ENCODE measurements at regions of chr12 and their contacts with region 1.

Region 1: DNA sequence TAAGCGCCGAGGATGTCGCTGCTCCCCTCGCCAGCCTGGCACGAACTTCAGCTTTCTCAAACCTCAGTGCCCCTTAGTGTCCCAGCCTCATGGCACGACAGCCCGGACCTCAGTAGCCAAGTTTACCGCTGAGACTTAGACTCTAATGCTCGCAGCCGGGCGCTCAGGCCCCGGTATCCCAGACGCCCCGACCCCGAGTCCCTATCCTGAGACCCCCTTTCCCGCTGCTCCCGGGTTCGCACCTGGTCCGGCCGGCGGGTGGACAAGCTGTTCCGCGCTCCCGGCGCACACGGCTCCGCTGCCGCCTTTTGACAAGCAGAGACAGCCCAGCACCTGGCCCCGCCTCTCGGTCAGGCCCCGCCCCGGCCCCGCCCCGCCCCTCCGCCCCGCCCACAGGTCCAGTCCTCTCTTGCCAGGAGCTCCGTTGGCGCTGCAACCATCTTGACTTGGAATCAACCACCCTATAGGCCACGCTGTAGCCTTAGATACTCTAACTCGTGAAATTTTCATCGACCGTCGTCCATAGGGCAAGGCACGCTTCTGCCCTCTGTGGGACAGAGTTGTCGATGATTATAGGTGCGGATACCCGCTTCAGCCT is at the start of gene VDR:
- DNase-seq: peak; percentile 65
- H3K4me3 Mint-ChIP-seq: peak within 1 kb of the TSS; percentile 100
- H3K27ac Mint-ChIP-seq: peak within 1 kb of the TSS; percentile 98
- H3K4me1 Mint-ChIP-seq: peaks cover 45% of the 10 kb centered on the region
- H3K27me3 Mint-ChIP-seq: peaks cover 31% of the 10 kb centered on the region
- total RNA-seq, gene VDR: 312 and 317 TPM in 2 replicates

Region 2: DNA sequence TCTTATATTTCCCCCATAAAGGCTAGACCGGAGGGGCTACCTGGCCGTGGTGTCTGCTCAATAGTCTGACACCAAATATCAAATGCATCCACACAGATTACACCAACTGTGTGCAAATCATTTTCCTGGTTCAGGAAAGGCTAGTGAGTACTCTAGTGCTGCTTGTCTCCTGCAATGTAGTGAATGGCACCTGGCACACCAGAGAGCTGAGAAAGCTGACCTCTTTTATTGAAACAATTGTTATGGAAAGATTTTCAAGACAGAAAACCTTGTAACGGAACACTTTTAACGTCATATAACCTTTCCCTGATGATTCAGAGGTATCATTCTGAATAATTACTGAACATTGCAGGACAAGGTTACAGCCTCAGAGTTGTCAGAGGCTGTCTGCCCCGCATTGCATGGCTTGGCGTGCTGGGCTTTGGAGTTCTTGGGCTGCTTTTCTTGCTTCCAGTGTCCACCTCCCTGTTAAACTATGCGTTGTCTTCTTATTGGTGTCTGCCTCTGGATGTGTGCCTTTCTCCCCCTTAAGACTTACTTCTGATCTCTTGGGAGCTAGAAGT is 44.5 kb before region 1 on chr12:
- intact Hi-C with region 1: loop called (anchors 2 kb)
- DNase-seq: no peak
- H3K4me3 Mint-ChIP-seq: peak overlapping the region; percentile 53
- H3K27ac Mint-ChIP-seq: peak overlapping the region; percentile 99
- H3K4me1 Mint-ChIP-seq: peaks cover 63% of the 10 kb centered on the region
- H3K27me3 Mint-ChIP-seq: no peaks in the 10 kb centered on the region

Region 3: DNA sequence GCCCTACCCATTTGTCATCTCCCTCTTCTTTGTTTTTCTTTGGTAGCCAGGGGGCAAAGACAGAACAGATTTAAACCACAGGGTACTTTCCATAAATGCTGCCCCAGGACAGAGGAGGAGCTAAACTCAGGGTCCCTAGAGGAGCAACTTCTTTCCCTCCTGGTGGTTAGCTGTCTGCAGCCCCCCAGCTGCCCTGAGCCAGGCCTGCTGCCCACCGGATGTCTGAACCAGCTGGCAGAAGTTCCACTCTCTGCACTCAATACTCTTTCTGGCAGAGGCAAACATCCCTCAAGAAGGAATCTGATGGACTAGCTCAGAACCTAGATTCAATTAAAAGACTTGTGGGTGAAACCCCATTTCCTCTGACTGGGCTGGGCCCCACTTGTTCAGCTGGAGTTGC is 10.7 kb before region 1 on chr12:
- intact Hi-C with region 1: loop called (anchors 1 kb)
- DNase-seq: no peak
- H3K4me3 Mint-ChIP-seq: peak overlapping the region; percentile 23
- H3K27ac Mint-ChIP-seq: peak overlapping the region; percentile 85
- H3K4me1 Mint-ChIP-seq: peaks cover 93% of the 10 kb centered on the region
- H3K27me3 Mint-ChIP-seq: no peaks in the 10 kb centered on the region

Region 4: DNA sequence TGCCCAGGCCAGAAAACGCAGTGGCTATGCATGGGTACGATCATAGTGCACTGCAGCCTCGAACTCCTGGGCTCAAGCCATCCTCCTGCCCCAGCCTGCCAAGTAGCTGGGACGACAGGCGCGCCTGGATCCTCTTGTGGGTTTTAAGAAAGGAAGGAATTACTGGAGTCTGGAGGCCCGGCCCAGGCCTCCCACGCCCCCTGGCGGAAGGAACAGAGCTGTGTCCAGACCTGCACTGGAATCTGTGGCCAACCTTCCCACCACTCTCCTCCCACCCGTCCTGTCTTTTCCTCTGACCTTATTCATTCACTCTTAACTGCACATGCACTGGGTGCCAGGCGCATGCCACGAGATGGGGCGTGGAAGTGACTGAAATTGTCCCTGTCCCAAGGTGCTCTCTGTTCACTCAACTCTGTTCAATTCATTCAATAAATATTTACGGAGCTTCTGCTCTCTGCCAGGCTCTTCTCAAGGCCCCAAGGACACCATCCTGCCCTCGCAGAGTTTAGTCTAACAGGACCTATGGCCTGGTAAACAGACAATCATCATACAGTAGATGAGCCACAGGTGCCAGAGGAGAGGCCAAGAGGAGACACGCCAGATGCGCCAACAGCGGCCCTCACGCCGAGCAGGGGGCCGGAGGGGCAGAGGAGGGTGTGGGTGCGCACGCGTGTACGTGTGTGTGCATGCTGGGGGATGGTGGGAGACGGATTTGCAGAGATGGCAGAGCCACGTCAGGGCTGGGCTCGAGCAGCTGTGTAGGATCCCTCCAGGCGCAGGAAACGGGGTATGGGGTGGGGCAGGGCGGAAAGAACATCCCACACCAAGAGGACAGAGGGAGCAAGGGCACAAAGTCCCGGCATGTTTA is 44.9 kb after region 1 on chr12:
- intact Hi-C with region 1: loop called (anchors 2 kb)
- DNase-seq: peak; percentile 31
- H3K4me3 Mint-ChIP-seq: no peak overlapping the region
- H3K27ac Mint-ChIP-seq: peak overlapping the region; percentile 6
- H3K4me1 Mint-ChIP-seq: peaks cover 17% of the 10 kb centered on the region
- H3K27me3 Mint-ChIP-seq: no peaks in the 10 kb centered on the region

Region 5: GRCh38 chr12:47963340-47964040 is 58.7 kb after region 1 on chr12 and contains the start of gene TMEM106C:
- intact Hi-C with region 1: loop called (anchors 1 kb)
- DNase-seq: peak; percentile 89
- H3K4me3 Mint-ChIP-seq: peak within 1 kb of the TSS; percentile 95
- H3K27ac Mint-ChIP-seq: peak within 1 kb of the TSS; percentile 81
- H3K4me1 Mint-ChIP-seq: peaks cover 30% of the 10 kb centered on the region
- H3K27me3 Mint-ChIP-seq: peaks cover 27% of the 10 kb centered on the region
- total RNA-seq, gene TMEM106C: 168 and 169 TPM in 2 replicates

Region 6: DNA sequence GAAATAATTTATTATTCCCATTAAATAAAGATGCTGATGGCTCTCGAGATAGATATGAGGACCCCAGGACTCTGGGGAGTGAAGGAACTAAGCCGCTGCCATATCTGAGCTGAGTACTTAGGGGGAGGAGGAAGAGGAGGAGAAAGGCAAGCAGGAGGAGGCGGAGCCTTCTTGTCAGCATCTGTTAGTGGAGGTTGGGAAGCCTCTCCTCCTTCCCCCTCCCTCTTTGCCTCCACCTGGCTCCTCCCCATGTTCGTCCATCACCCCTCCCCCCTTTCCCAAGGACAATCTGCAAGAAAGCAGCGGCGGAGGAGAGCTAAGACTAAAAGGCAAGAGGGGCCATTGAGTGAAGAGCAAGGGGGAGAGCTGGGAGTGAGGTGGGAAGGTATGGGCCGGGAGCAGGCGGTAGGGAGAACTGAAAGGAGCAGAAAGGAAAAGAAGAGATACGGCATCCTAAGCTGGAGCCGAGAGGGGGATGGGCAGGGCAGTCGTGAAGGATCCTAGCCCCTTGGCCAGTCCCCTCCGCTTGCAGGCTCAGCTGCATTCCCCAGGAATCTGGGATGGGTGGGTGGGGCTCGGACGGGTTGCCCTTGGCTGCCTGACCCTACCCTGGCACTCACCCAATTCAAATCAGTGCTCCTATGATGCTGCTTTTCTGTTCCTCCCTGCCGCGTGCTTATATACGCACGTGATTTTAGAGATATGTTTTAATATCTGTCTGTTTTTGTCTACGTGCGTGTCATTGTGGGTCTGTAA is 214.4 kb after region 1 on chr12 and contains the start of gene PFKM:
- intact Hi-C with region 1: no loop called
- DNase-seq: peak; percentile 69
- H3K4me3 Mint-ChIP-seq: peak within 1 kb of the TSS; percentile 96
- H3K27ac Mint-ChIP-seq: peak within 1 kb of the TSS; percentile 74
- H3K4me1 Mint-ChIP-seq: peaks cover 20% of the 10 kb centered on the region
- H3K27me3 Mint-ChIP-seq: peaks cover 18% of the 10 kb centered on the region
- total RNA-seq, gene PFKM: 55.2 and 67.3 TPM in 2 replicates

Region 7: DNA sequence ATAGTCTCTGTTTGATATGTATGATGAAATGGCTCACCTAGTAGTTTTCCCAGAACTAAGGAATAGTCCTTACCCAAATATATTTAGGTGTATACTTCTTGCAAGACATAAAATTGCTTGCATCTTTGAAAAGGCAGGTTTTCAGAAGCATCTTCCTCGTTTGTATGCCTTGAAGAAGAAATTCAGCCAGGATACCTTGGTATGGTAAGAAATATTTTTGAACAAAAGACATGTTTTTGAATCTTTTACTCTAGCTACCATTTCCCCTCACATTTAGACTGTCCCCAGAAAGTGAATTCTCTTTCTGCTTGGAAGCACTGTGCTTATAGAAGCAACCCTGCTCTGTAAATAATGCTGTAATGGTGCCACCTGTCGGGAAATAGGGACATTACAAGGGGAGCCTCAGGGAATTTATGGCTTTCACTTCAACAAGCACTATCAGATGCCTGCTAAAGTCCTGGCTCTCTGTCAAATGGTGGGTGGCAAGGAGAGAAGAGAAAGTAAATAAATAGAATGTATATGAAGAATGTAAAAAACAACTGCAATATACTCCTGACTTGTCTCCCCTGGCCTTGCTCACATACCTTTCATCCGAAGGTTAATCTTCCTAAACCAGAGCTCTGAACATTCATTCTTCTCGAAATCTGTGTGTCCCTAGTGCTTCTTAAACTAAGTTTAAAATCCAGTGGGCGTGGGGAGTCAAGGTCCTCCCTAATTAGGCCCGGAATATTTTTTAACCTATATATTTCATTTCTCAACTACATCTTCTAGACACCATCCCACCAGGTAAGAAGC is 284.7 kb after region 1 on chr12:
- intact Hi-C with region 1: loop called (anchors 5 kb)
- DNase-seq: peak; percentile 52
- H3K4me3 Mint-ChIP-seq: no peak overlapping the region
- H3K27ac Mint-ChIP-seq: no peak overlapping the region
- H3K4me1 Mint-ChIP-seq: peaks cover 9% of the 10 kb centered on the region
- H3K27me3 Mint-ChIP-seq: peaks cover 64% of the 10 kb centered on the region